ENCODE measurements at regions of chr7 and their contacts with region 1.

Region 1: DNA sequence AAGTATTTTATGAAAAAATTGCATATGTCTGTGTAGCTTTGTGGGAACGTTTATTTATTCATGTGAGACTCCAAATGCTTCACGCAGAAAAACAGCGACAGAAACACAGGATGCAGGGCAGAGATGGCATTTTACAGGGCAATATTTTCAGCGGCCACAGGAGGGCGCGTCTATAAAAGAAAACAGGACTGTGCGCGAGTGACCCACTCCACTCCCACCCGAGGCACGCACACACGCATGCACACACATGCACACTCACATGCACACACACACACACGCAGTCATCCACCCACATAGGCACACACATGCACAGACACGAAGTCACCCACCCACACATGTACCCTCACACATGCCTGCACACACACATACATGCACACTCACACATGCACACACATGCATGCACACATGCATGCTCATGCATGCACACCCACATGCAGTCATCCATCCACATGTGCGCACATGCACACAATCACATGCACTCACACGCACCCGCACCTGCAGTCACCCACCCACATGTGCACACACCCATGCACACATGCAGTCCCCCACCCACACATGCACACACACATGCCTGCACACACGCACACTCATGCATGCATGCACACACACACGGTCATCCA is 96.3 kb downstream of the DNAJB6 start:
- DNase-seq: peak; percentile 32
- H3K4me3 ChIP-seq: peak overlapping the region; percentile 2
- H3K27ac ChIP-seq: no peak overlapping the region
- H3K4me1 ChIP-seq: no peaks in the 10 kb centered on the region
- H3K27me3 ChIP-seq: no peaks in the 10 kb centered on the region
- CTCF ChIP-seq: peak; percentile 56

Region 2: DNA sequence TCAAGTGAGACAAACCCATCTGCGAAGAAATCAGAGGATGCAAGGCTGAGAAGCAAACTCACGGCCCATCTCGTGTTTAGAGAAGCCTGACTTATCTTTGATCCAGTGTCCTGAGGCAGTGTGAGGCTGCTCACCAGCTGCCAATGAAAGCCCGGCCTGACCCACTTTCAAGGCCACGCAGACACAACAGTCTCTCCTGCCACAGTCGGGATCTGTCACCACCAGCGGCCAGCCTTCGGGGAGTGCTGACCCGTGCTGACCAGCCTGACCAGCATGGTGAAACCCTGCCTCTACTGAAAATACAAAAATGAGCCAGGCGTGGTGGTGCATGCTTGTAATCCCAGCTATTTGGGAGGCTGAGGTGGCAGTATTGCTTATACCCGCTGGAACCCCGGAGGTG is 103.6 kb before region 1 on chr7:
- intact Hi-C with region 1: no loop called
- DNase-seq: no peak
- H3K4me3 ChIP-seq: no peak overlapping the region
- H3K27ac ChIP-seq: no peak overlapping the region
- H3K4me1 ChIP-seq: no peaks in the 10 kb centered on the region
- H3K27me3 ChIP-seq: no peaks in the 10 kb centered on the region
- CTCF ChIP-seq: no peak

Region 3: DNA sequence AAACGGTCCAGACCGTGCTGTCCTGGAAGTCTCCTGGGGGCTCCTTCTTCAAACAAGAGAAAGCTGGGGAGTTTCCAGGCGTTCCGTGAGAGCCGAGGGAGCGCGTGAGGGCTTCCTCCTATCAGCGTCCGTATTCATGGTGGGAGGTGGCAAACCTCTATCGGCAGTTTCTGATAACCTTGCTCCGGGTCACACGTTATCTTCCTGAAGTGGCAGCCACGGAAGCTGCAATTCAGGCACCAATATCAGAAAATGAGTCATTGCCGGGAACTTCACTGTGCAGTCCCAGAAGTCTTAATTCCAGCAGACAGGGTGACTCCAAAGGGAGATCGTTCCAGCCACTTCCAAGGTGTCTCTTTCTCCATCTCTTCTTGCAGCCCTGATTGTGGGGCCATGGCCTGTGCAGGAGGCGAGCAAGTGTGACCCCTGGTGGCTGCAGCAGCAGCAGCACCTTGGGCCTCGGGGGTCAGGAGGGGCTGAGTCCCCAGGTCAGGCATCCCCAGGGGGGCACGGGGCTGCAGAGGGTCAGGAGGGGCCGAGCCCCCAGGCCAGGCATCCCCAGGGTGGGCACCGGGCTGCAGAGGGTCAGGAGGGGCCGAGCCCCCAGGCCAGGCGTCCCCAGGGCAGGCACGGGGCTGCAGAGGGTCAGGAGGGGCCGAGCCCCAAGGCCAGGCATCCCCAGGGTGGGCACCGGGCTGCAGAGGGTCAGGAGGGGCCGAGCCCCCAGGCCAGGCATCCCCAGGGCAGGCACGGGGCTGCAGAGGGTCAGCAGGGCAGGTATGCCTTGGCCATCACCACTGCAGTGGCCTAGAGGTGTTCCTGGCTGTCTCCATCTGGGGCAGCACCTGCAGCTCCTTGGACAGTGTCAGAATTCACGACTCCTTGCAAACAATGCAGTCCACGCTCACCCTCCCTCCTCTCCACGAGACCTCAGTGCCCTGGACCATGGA is 442.4 kb after region 1 on chr7:
- intact Hi-C with region 1: loop called (anchors 5 kb)
- DNase-seq: no peak
- H3K4me3 ChIP-seq: no peak overlapping the region
- H3K27ac ChIP-seq: no peak overlapping the region
- H3K4me1 ChIP-seq: no peaks in the 10 kb centered on the region
- H3K27me3 ChIP-seq: no peaks in the 10 kb centered on the region
- CTCF ChIP-seq: peak; percentile 46

Region 4: GRCh38 chr7:158407581-158408317 is 974.7 kb after region 1 on chr7:
- intact Hi-C with region 1: loop called (anchors 5 kb)
- DNase-seq: no peak
- H3K4me3 ChIP-seq: no peak overlapping the region
- H3K27ac ChIP-seq: no peak overlapping the region
- H3K4me1 ChIP-seq: no peaks in the 10 kb centered on the region
- H3K27me3 ChIP-seq: no peaks in the 10 kb centered on the region
- CTCF ChIP-seq: no peak

Measured in colonic mucosa (tissue), 4 donors.